Sigmoid colon (tissue), 7 donors: ENCODE measurements at regions of chr11 and their contacts with region 1.

Region 1: DNA sequence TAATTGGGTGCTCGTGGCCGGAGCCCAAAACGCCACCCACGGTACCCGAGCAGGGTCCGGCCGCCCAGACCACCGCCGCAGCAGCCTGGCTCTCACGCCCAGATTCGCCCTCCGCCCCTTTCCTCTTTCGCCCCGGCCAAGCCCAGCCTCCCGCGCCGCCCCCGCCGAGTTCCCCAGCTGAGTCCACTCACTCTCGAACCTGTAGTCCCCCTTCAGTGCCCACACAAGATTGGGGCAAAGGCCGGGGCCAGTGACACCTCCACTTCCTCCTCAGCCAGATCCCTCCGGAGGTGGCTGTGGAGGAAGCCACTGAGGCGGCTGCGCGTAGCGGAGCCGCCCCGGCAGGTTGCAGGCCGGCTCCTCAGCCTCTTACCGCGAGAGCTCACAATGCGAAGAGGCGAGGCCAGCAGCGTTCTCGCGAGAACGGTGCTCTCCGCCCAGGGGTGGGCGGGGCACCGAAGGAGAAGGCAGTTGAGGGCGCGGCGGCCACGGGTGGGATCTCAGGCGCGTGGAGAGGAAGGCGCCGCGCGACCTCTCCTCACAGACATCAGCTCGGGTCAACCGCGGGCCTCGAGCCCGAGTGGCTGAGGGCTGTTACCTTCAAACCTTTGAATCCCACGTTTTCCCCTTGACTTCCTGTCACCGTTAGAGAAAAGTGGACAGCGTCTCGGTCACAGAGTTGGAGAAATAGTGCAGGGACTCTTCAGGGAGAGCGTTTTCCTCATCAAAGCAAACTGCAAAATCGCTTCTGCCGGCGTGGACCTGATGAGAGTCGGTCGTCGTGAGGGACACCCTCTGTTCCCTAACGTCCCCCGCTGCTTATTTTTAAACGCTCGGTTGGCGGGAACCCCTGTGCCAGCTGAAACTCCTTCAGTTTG is at the start of gene BTBD10:
- DNase-seq: peak; percentile 96
- H3K4me3 ChIP-seq: peak within 1 kb of the TSS; percentile 74 to 92 (median 78)
- H3K27ac ChIP-seq: peak within 1 kb of the TSS; percentile 85 to 92 (median 92)
- H3K4me1 ChIP-seq: peaks cover 0 to 21% (median 14%) of the 10 kb centered on the region in 4 donors
- H3K27me3 ChIP-seq: no peaks in the 10 kb centered on the region
- CTCF ChIP-seq: no peak
- EP300 ChIP-seq: no peak
- POLR2A ChIP-seq: peak; percentile 74 to 86
- total RNA-seq, gene BTBD10: 43.3 to 77.8 (median 61.2) TPM

Region 2: GRCh38 chr11:12963792-12964536 is 499.2 kb before region 1 on chr11:
- intact Hi-C with region 1: loop called (anchors 5 kb)
- DNase-seq: peak; percentile 73
- H3K4me3 ChIP-seq: no peak overlapping the region
- H3K27ac ChIP-seq: no peak overlapping the region
- H3K4me1 ChIP-seq: no peaks in the 10 kb centered on the region
- H3K27me3 ChIP-seq: no peaks in the 10 kb centered on the region
- CTCF ChIP-seq: peak; percentile 50 to 90 (median 79)
- EP300 ChIP-seq: no peak
- POLR2A ChIP-seq: no peak

Region 3: DNA sequence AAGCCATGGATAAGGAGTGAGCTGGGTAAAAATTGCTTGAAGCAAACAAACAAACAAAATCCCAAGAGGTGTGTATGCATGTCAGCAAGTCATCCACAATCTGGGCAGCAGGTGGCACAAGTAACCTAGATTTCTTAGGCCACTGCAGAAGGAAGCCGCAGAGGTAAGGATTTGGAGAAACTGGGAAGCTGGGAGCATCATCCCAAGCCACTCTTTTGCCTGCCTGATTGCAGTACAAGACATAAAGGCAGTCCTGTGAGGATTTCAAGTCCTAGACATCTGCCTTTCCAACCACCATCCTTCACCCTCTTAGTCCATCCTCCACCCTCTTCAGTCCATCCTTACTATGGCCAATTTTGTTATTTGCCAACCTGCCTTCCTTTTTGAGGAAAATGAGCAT is 252.7 kb before region 1 on chr11:
- intact Hi-C with region 1: loop called (anchors 10 kb)
- DNase-seq: peak; percentile 74
- H3K4me3 ChIP-seq: no peak overlapping the region
- H3K27ac ChIP-seq: no peak overlapping the region
- H3K4me1 ChIP-seq: peaks cover 0 to 5% (median 0%) of the 10 kb centered on the region in 4 donors
- H3K27me3 ChIP-seq: peaks cover 0 to 3% (median 0%) of the 10 kb centered on the region in 3 donors
- CTCF ChIP-seq: peak; percentile 18 to 64 (median 50)
- EP300 ChIP-seq: no peak
- POLR2A ChIP-seq: no peak

Region 4: DNA sequence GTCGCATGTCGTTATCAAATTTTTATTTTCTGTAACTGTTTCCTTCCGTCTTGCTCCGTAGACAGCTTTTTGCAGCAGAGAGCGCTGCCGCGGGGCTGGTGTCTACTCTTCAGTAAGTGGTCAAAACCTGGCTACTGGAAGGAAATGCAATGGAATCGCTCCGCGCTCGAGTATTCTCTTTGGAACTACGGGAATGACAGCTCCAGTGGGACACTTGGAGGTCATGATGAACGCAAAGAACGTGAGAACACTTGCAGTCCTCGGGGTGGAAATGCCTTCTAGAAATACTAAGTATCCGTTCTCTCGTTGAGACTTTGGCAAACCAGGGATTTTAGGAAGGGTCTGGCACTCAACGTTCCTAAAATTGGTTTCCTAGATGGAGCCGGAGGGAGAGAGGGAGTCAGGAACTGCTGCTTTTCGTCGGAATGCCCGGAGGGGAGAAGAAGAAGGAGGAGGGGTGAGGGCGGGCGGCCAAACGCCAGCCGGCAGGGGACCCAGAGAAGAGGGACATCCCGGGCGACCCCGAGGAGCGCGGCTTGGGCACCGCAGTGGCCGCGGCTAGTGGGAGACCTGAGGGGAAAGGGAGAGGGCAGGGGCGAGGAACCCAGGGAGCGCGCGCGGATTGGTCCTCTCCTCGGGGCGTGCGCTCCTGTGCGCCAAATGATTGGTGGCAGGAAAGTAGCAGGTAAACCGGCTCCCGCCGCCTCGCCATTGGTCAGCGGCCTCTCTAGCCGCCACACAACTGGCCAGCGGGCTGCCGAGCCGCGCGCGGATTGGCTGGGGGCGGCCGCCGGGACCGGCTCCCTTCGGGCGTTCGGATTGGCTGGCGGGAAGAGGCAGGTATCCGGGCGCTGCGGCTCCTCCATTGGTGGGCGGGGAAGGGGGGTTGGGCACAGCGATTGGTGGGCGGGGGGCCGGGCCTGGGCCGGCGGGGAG is 186.0 kb before region 1 on chr11:
- intact Hi-C with region 1: loop called (anchors 10 kb)
- DNase-seq: peak; percentile 99
- H3K4me3 ChIP-seq: peak overlapping the region; percentile 48 to 87 (median 78)
- H3K27ac ChIP-seq: peak overlapping the region; percentile 89 to 95 (median 92)
- H3K4me1 ChIP-seq: peaks cover 0 to 33% (median 19%) of the 10 kb centered on the region in 4 donors
- H3K27me3 ChIP-seq: no peaks in the 10 kb centered on the region
- CTCF ChIP-seq: no peak
- EP300 ChIP-seq: no peak
- POLR2A ChIP-seq: peak; percentile 54 to 78

Region 5: DNA sequence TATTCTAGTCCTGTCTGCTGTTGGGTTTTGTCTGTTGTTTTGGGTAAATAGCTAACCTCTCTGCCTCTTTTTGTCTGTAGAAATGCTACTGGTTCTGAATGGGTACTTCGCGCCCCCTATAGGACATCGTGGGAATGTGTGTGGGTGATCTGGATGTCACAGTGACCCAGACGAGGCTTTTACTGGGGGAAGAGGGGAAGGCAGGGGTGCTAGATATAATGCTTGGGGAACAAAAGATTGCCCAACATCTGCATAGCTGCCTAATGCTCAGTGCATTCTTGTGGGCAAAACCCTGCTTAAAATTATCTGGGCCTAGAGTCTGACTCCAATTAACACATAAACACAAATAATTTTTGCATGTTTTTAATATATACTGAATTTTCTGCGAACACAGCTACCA is 127.8 kb before region 1 on chr11:
- intact Hi-C with region 1: loop called (anchors 10 kb)
- DNase-seq: peak; percentile 72
- H3K4me3 ChIP-seq: no peak overlapping the region
- H3K27ac ChIP-seq: no peak overlapping the region
- H3K4me1 ChIP-seq: peaks cover 0 to 49% (median 30%) of the 10 kb centered on the region in 4 donors
- H3K27me3 ChIP-seq: no peaks in the 10 kb centered on the region
- CTCF ChIP-seq: peak; percentile 47 to 77 (median 64)
- EP300 ChIP-seq: no peak
- POLR2A ChIP-seq: no peak

Region 6: DNA sequence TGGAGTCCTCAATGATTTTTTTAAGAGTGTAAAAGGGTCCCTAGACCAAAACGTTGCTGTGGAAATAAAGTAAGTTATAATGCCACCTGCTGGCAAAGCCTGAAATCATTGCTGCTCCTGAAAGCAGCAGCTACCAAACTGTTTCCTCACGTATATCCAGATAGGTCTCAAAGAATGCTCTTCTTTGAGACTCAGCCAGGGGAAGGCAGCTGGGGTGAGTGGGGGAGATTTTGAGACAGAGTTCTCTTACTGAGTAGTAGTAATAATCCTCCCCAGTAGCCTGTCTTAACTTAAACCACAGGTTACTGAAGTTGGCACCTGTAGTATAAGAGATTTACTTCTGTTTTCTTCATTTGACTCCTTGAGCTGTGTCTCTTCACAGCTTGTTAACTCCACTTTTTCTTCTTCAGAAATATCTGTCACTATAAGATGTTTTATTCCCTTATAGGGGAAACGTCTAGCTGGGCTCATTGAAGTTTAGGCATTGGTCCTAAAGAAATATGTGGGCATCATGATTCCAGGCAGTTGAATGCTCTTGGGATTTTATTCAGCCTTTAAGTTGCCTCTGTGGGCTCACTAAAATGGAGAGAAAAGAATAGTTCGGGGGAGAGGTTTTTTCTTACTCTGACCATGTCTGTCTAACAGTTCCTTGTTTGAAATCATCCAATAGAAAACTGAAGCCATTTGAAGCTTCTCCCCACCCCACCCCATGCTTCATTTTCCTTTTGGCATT is 78.1 kb before region 1 on chr11:
- intact Hi-C with region 1: loop called (anchors 5 kb)
- DNase-seq: no peak
- H3K4me3 ChIP-seq: no peak overlapping the region
- H3K27ac ChIP-seq: peak overlapping the region in 2 of 4 donors; percentile 22
- H3K4me1 ChIP-seq: peaks cover 0 to 17% (median 0%) of the 10 kb centered on the region in 4 donors
- H3K27me3 ChIP-seq: no peaks in the 10 kb centered on the region
- CTCF ChIP-seq: peak in 3 of 4 experiments; percentile 12 to 45 (median 44)
- EP300 ChIP-seq: no peak
- POLR2A ChIP-seq: no peak

Region 7: GRCh38 chr11:13668102-13668956 is 205.2 kb after region 1 on chr11 and contains the start of gene FAR1:
- intact Hi-C with region 1: loop called (anchors 2 kb)
- DNase-seq: peak; percentile 99
- H3K4me3 ChIP-seq: peak within 1 kb of the TSS; percentile 45 to 97 (median 92)
- H3K27ac ChIP-seq: peak within 1 kb of the TSS; percentile 88 to 92 (median 89)
- H3K4me1 ChIP-seq: peaks cover 0 to 31% (median 24%) of the 10 kb centered on the region in 4 donors
- H3K27me3 ChIP-seq: no peaks in the 10 kb centered on the region
- CTCF ChIP-seq: peak in 3 of 4 experiments; percentile 25 to 55 (median 38)
- EP300 ChIP-seq: no peak
- POLR2A ChIP-seq: peak; percentile 58 to 78
- total RNA-seq, gene FAR1: 37.1 to 52.1 (median 40.3) TPM